ENCODE measurements at regions of chr12 and their contacts with region 1.

Region 1: GRCh38 chr12:63843721-63844390 is 644 bp upstream of the SRGAP1 start:
- DNase-seq: peak; percentile 74 to 81
- ATAC-seq: peak; percentile 88 to 90
- H3K4me3 ChIP-seq: peak overlapping the region; percentile 73 to 91 (median 84)
- H3K27ac ChIP-seq: peak overlapping the region; percentile 79 to 85 (median 83)
- H3K4me1 ChIP-seq: peaks cover 4 to 7% of the 10 kb centered on the region in 2 donors
- H3K27me3 ChIP-seq: no peaks in the 10 kb centered on the region
- CTCF ChIP-seq: peak; percentile 83 to 91 (median 88)
- POLR2A ChIP-seq: peak in 1 of 2 donors; percentile 55

Region 2: GRCh38 chr12:63294327-63294632 is 549.6 kb before region 1 on chr12:
- in situ Hi-C with region 1: no loop called
- intact Hi-C with region 1: no loop called
- DNase-seq: no peak
- ATAC-seq: no peak
- H3K4me3 ChIP-seq: no peak overlapping the region
- H3K27ac ChIP-seq: no peak overlapping the region
- H3K4me1 ChIP-seq: no peaks in the 10 kb centered on the region
- H3K27me3 ChIP-seq: no peaks in the 10 kb centered on the region
- CTCF ChIP-seq: no peak
- POLR2A ChIP-seq: no peak

Region 3: GRCh38 chr12:63439774-63440447 is 403.9 kb before region 1 on chr12:
- in situ Hi-C with region 1: no loop called
- intact Hi-C with region 1: no loop called
- DNase-seq: no peak
- ATAC-seq: no peak
- H3K4me3 ChIP-seq: no peak overlapping the region
- H3K27ac ChIP-seq: no peak overlapping the region
- H3K4me1 ChIP-seq: no peaks in the 10 kb centered on the region
- H3K27me3 ChIP-seq: no peaks in the 10 kb centered on the region
- CTCF ChIP-seq: no peak
- POLR2A ChIP-seq: no peak

Region 4: GRCh38 chr12:64103825-64104740 is 260.2 kb after region 1 on chr12:
- in situ Hi-C with region 1: no loop called
- intact Hi-C with region 1: loop called (anchors 5 kb)
- DNase-seq: peak; percentile 46 to 57
- ATAC-seq: peak; percentile 98 to 100
- H3K4me3 ChIP-seq: no peak overlapping the region
- H3K27ac ChIP-seq: no peak overlapping the region
- H3K4me1 ChIP-seq: peaks cover 8 to 17% of the 10 kb centered on the region in 2 donors
- H3K27me3 ChIP-seq: no peaks in the 10 kb centered on the region
- CTCF ChIP-seq: no peak
- POLR2A ChIP-seq: no peak

Region 5: GRCh38 chr12:64256166-64256800 is 412.4 kb after region 1 on chr12:
- in situ Hi-C with region 1: loop called (anchors 5 kb)
- intact Hi-C with region 1: loop called (anchors 1 kb)
- DNase-seq: no peak
- ATAC-seq: peak; percentile 32 to 39
- H3K4me3 ChIP-seq: no peak overlapping the region
- H3K27ac ChIP-seq: no peak overlapping the region
- H3K4me1 ChIP-seq: peaks cover 0 to 18% of the 10 kb centered on the region in 2 donors
- H3K27me3 ChIP-seq: no peaks in the 10 kb centered on the region
- CTCF ChIP-seq: peak; percentile 58 to 77 (median 74)
- POLR2A ChIP-seq: no peak

Region 6: DNA sequence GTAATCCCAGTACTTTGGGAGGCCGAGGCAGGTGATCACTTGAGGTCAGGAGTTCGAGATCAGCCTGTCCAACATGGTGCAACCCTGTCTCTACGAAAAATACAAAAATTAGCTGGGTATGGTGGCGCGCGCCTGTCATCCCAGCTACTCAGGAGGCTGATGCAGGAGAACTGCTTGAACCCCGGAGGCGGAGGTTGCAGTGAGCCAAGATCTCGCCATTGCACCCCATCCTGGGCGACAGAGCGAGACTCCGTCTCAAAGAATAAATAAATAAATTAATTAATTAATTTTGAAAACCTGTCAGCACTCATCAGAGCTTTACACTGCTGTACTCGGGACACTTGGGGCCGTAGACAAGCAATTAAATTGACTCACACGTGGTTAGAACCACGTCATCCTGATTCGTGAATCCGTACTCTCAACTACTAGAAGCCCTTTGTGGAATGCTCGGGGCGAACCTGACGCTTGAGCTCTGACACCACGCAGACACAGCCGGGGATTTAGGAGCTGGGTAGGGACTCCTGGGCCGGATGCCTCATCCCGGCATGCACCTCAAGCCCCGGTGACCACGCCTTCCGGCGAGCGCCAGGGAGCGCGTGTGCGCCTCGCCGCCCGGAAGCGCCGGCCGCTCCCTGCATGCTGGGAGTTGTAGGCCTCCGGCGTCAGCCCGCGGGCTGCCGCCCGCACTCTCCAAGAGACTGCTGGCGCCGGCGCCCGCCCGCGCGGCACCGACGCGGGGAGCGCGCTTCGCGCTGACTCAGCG is 560.0 kb after region 1 on chr12 and contains the start of gene XPOT:
- in situ Hi-C with region 1: loop called in 1 of 4 experiments (anchors 25 kb)
- intact Hi-C with region 1: loop called (anchors 5 kb)
- DNase-seq: peak; percentile 84 to 95
- ATAC-seq: peak; percentile 88 to 93
- H3K4me3 ChIP-seq: peak within 1 kb of the TSS; percentile 93 to 99 (median 98)
- H3K27ac ChIP-seq: peak within 1 kb of the TSS; percentile 100
- H3K4me1 ChIP-seq: peaks cover 10 to 12% of the 10 kb centered on the region in 2 donors
- H3K27me3 ChIP-seq: no peaks in the 10 kb centered on the region
- CTCF ChIP-seq: peak in 1 of 5 experiments; percentile 22
- POLR2A ChIP-seq: no peak
- total RNA-seq, gene XPOT: 21.1 to 27.1 (median 25.1) TPM